ENCODE measurements at regions of chr12 and their contacts with region 1.

Region 1: GRCh38 chr12:49188914-49189367 is at the start of gene TUBA1A:
- DNase-seq: peak; percentile 89 to 99 (median 95)
- H3K4me3 ChIP-seq: peak within 1 kb of the TSS; percentile 25 to 99 (median 63)
- H3K27ac ChIP-seq: peak within 1 kb of the TSS; percentile 73 to 98 (median 90)
- H3K4me1 ChIP-seq: peaks cover 9 to 19% of the 10 kb centered on the region in 2 donors
- H3K27me3 ChIP-seq: no peaks in the 10 kb centered on the region
- CTCF ChIP-seq: no peak
- POLR2A ChIP-seq: peak; percentile 93 to 95
- total RNA-seq, gene TUBA1A: 59.1 to 315 (median 145) TPM

Region 2: GRCh38 chr12:48350249-48351021 is 838.5 kb before region 1 on chr12 and contains the start of gene ZNF641:
- intact Hi-C with region 1: no loop called
- DNase-seq: peak; percentile 81 to 91 (median 87)
- H3K4me3 ChIP-seq: peak within 1 kb of the TSS; percentile 44 to 99 (median 68)
- H3K27ac ChIP-seq: peak within 1 kb of the TSS; percentile 82 to 100 (median 95)
- H3K4me1 ChIP-seq: peaks cover 25 to 32% of the 10 kb centered on the region in 2 donors
- H3K27me3 ChIP-seq: no peaks in the 10 kb centered on the region
- CTCF ChIP-seq: no peak
- POLR2A ChIP-seq: peak in 1 of 2 donors; percentile 56
- total RNA-seq, gene ZNF641: 32.5 to 65.2 (median 46.6) TPM

Region 3: GRCh38 chr12:49130151-49131050 is 58.5 kb before region 1 on chr12:
- intact Hi-C with region 1: loop called (anchors 5 to 10 kb)
- DNase-seq: peak; percentile 93 to 98 (median 95)
- H3K4me3 ChIP-seq: peak overlapping the region; percentile 75 to 97 (median 86)
- H3K27ac ChIP-seq: peak overlapping the region; percentile 97 to 99 (median 99)
- H3K4me1 ChIP-seq: peaks cover 11 to 27% of the 10 kb centered on the region in 2 donors
- H3K27me3 ChIP-seq: no peaks in the 10 kb centered on the region
- CTCF ChIP-seq: peak; percentile 74 to 94 (median 90)
- POLR2A ChIP-seq: no peak

Region 4: DNA sequence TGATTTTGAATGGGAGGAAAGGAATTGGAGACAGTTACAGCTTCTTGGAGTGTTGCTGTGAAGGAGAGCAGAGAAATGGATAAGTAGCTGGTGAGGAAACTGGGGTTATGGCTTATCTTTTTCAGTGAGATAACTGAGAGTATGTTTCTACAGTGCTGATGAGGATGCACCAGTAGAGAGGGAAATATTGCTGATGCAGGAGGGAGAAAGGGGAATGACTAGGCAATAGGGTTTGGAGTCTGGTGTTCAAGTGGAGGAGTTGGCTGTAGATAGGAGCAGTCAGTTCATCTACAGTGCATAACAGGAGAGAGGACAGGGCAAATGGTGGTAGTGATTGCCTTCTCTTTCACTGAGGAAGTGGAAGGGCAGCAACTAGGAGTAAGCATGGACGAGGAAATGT is 211.4 kb after region 1 on chr12:
- intact Hi-C with region 1: no loop called
- DNase-seq: no peak
- H3K4me3 ChIP-seq: no peak overlapping the region
- H3K27ac ChIP-seq: no peak overlapping the region
- H3K4me1 ChIP-seq: peaks cover 0 to 5% of the 10 kb centered on the region in 2 donors
- H3K27me3 ChIP-seq: no peaks in the 10 kb centered on the region
- CTCF ChIP-seq: no peak
- POLR2A ChIP-seq: no peak